CD8-positive, alpha-beta memory T cell (primary cell): ENCODE measurements at regions of chr20 and their contacts with region 1.

Region 1: DNA sequence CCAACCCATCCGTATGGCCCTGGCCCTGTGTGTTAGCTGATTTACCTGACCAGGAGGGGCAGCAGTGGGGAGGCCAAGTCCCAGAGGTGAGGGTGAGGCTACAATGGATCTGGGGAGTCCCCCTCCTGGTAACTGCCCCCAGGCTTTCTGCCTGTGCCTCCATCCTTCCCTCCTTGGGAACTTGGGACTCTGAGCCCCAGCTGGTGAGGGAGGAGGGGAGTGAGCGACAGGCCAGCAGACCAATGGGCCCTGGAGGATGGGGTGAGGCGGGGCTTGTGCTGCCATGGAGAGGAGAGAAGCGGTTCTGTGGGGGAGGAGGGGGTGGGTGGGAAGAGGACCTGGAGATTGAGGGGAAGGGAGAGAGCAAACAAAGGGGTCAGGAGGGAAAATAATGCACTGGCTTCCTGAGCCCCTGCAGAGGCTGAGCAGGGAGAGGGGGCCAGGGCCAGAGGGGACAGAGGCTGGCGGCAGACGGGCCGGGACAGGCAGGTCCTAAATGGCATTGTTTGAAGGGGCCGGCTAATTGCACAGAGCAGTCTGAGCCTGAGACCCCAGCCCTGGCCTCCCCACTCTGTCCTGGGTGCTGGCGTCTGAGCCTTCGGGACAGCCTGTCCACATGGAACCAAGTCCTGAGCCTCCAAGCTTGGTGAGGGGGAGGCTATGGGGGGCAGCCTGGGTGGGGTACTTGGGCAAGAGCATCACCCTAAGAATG is 17.5 kb downstream of the DNMT3B start:
- DNase-seq: no peak
- H3K4me3 ChIP-seq: no peak overlapping the region
- H3K4me3 Mint-ChIP-seq: no peak overlapping the region
- H3K27ac ChIP-seq: no peak overlapping the region
- H3K27ac Mint-ChIP-seq: no peak overlapping the region
- H3K4me1 ChIP-seq: no peaks in the 10 kb centered on the region
- H3K4me1 Mint-ChIP-seq: no peaks in the 10 kb centered on the region
- H3K27me3 ChIP-seq: no peaks in the 10 kb centered on the region
- H3K27me3 Mint-ChIP-seq: peaks cover 0 to 3% of the 10 kb centered on the region in 2 donors

Region 2: GRCh38 chr20:32605167-32605656 is 174.4 kb before region 1 on chr20:
- CTCF ChIA-PET with region 1: no interaction called
- POLR2A ChIA-PET with region 1: no interaction called
- DNase-seq: no peak
- H3K4me3 ChIP-seq: no peak overlapping the region
- H3K4me3 Mint-ChIP-seq: no peak overlapping the region
- H3K27ac ChIP-seq: no peak overlapping the region
- H3K27ac Mint-ChIP-seq: no peak overlapping the region
- H3K4me1 ChIP-seq: no peaks in the 10 kb centered on the region
- H3K4me1 Mint-ChIP-seq: peaks cover 0 to 3% (median 2%) of the 10 kb centered on the region in 3 donors
- H3K27me3 ChIP-seq: no peaks in the 10 kb centered on the region
- H3K27me3 Mint-ChIP-seq: peaks cover 6 to 12% of the 10 kb centered on the region in 2 donors

Region 3: GRCh38 chr20:32674362-32674789 is 105.3 kb before region 1 on chr20:
- CTCF ChIA-PET with region 1: interaction called, 225 read pairs
- POLR2A ChIA-PET with region 1: no interaction called
- DNase-seq: peak; percentile 43 to 69 (median 56)
- H3K4me3 ChIP-seq: no peak overlapping the region
- H3K4me3 Mint-ChIP-seq: no peak overlapping the region
- H3K27ac ChIP-seq: no peak overlapping the region
- H3K27ac Mint-ChIP-seq: peak overlapping the region in 2 of 8 donors; percentile 17 to 23
- H3K4me1 ChIP-seq: peaks cover 28% of the 10 kb centered on the region
- H3K4me1 Mint-ChIP-seq: peaks cover 17 to 27% (median 18%) of the 10 kb centered on the region in 3 donors
- H3K27me3 ChIP-seq: no peaks in the 10 kb centered on the region
- H3K27me3 Mint-ChIP-seq: peaks cover 0 to 3% of the 10 kb centered on the region in 2 donors

Region 4: GRCh38 chr20:32737371-32738223 is 42.1 kb before region 1 on chr20:
- CTCF ChIA-PET with region 1: interaction called, 15 read pairs
- POLR2A ChIA-PET with region 1: no interaction called
- DNase-seq: peak in 3 of 5 donors; percentile 56 to 64 (median 58)
- H3K4me3 ChIP-seq: peak overlapping the region; percentile 6
- H3K4me3 Mint-ChIP-seq: peak overlapping the region; percentile 41 to 80 (median 64)
- H3K27ac ChIP-seq: peak overlapping the region; percentile 18
- H3K27ac Mint-ChIP-seq: peak overlapping the region; percentile 84 to 96 (median 92)
- H3K4me1 ChIP-seq: peaks cover 54% of the 10 kb centered on the region
- H3K4me1 Mint-ChIP-seq: peaks cover 33 to 63% (median 51%) of the 10 kb centered on the region in 3 donors
- H3K27me3 ChIP-seq: no peaks in the 10 kb centered on the region
- H3K27me3 Mint-ChIP-seq: peaks cover 0 to 2% of the 10 kb centered on the region in 2 donors

Region 5: GRCh38 chr20:32762149-32762753 is 17.4 kb before region 1 on chr20 and contains the start of gene DNMT3B:
- CTCF ChIA-PET with region 1: interaction called, 21 read pairs
- POLR2A ChIA-PET with region 1: interaction called, 3 read pairs
- DNase-seq: peak; percentile 61 to 79 (median 68)
- H3K4me3 ChIP-seq: peak within 1 kb of the TSS; percentile 65
- H3K4me3 Mint-ChIP-seq: peak within 1 kb of the TSS; percentile 79 to 94 (median 87)
- H3K27ac ChIP-seq: peak within 1 kb of the TSS; percentile 76
- H3K27ac Mint-ChIP-seq: peak within 1 kb of the TSS in 5 of 8 donors; percentile 6 to 72 (median 54)
- H3K4me1 ChIP-seq: peaks cover 12% of the 10 kb centered on the region
- H3K4me1 Mint-ChIP-seq: peaks cover 9 to 14% (median 12%) of the 10 kb centered on the region in 3 donors
- H3K27me3 ChIP-seq: no peaks in the 10 kb centered on the region
- H3K27me3 Mint-ChIP-seq: peaks cover 0 to 3% of the 10 kb centered on the region in 2 donors
- total RNA-seq, gene DNMT3B: 1.00 to 1.4 TPM

Region 6: DNA sequence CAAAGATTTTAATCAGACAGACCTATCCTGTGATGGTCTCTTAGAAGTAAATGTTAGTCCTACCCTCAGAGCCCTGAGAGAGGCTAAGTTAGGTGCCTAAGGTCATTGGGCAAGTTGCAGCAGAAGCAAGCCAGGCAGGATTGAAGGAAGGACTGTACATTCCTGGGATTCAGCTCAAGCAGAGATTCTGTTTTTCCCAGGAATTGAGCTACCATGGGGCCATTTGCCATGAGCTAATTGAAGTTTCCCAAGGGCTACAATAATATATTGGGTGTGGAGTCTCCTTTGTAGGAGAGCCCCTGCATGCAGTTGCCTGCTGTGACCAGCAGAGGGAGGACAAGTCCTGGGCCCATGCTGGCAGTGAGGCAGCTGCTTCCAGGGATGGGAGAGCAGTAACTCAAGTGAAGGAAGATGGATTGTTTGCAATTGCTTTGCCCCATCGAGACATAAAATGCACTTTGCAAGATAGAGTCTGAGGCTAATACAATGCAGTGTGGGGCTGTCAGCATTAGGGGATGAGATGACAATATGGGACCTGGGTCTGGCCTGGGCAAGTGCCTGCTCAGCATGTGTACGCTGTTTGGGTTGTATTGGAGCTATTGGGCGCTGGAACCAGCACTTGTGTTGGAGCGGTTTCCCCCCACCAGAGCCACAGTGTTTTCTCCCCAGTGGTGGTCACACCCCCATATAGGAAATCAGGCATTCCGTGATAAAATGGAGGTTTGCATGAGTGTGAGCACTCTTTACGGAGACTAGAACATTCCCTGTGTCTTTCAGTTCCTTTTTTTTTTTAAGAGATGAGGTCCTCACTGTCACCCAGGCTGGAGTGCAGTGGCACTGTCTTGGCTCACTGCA is 10.5 kb after region 1 on chr20:
- CTCF ChIA-PET with region 1: interaction called, 18 read pairs
- POLR2A ChIA-PET with region 1: no interaction called
- DNase-seq: peak; percentile 50 to 79 (median 57)
- H3K4me3 ChIP-seq: no peak overlapping the region
- H3K4me3 Mint-ChIP-seq: no peak overlapping the region
- H3K27ac ChIP-seq: no peak overlapping the region
- H3K27ac Mint-ChIP-seq: peak overlapping the region in 1 of 8 donors; percentile 67
- H3K4me1 ChIP-seq: peaks cover 35% of the 10 kb centered on the region
- H3K4me1 Mint-ChIP-seq: peaks cover 15 to 36% (median 22%) of the 10 kb centered on the region in 3 donors
- H3K27me3 ChIP-seq: no peaks in the 10 kb centered on the region
- H3K27me3 Mint-ChIP-seq: no peaks in the 10 kb centered on the region

Region 7: GRCh38 chr20:32966881-32967781 is 187.5 kb after region 1 on chr20:
- CTCF ChIA-PET with region 1: no interaction called
- POLR2A ChIA-PET with region 1: no interaction called
- DNase-seq: peak; percentile 41 to 81 (median 71)
- H3K4me3 ChIP-seq: peak overlapping the region; percentile 40
- H3K4me3 Mint-ChIP-seq: peak overlapping the region; percentile 66 to 93 (median 81)
- H3K27ac ChIP-seq: peak overlapping the region; percentile 38
- H3K27ac Mint-ChIP-seq: peak overlapping the region in 2 of 8 donors; percentile 96 to 100
- H3K4me1 ChIP-seq: peaks cover 84% of the 10 kb centered on the region
- H3K4me1 Mint-ChIP-seq: peaks cover 20 to 63% (median 60%) of the 10 kb centered on the region in 3 donors
- H3K27me3 ChIP-seq: no peaks in the 10 kb centered on the region
- H3K27me3 Mint-ChIP-seq: peaks cover 0 to 1% of the 10 kb centered on the region in 2 donors